ENCODE measurements at regions of chr2 and their contacts with region 1.

Region 1: GRCh38 chr2:135741395-135742324 is at the start of gene UBXN4:
- DNase-seq: peak; percentile 99
- H3K4me3 ChIP-seq: peak within 1 kb of the TSS; percentile 71 to 99
- H3K27ac ChIP-seq: peak within 1 kb of the TSS; percentile 100
- H3K4me1 ChIP-seq: peaks cover 36% of the 10 kb centered on the region
- H3K27me3 ChIP-seq: no peaks in the 10 kb centered on the region
- CTCF ChIP-seq: peak in 1 of 3 experiments; percentile 13
- POLR2A ChIP-seq: peak in 1 of 2 donors; percentile 90
- total RNA-seq, gene UBXN4: 51.6 TPM

Region 2: GRCh38 chr2:135600915-135601314 is 140.7 kb before region 1 on chr2:
- intact Hi-C with region 1: no loop called
- DNase-seq: no peak
- H3K4me3 ChIP-seq: no peak overlapping the region
- H3K27ac ChIP-seq: no peak overlapping the region
- H3K4me1 ChIP-seq: peaks cover 12% of the 10 kb centered on the region
- H3K27me3 ChIP-seq: no peaks in the 10 kb centered on the region
- CTCF ChIP-seq: no peak
- POLR2A ChIP-seq: no peak

Region 3: DNA sequence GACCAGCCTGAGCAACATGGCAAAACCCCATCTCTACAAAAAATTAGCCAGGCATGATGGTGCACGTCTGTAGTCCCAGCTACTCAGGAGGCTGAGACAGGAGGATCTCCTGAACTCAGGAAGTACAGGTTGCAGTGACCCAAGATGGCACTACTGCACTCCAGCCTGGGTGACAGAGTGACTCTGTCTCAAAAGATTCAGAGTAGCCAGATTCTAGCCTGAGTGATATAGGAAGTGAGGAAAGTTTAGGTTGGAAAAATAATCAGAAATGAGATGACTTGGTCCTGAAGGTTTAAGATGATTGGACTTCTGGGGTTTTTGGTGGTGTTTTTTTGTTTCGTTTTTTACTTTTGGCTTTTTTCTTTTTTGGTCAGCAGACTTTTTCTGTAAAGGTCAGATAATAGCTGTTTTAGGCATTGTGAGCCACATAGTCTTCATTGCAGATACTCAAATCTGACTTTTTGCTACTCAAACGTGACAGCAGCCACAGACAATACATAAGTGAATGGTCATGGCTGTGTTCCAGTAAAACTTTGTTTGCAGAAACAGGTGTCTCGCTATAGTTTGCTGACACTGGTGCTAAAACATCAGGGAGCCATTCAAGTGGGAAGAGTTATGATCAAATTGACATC is 104.1 kb before region 1 on chr2:
- intact Hi-C with region 1: no loop called
- DNase-seq: no peak
- H3K4me3 ChIP-seq: no peak overlapping the region
- H3K27ac ChIP-seq: no peak overlapping the region
- H3K4me1 ChIP-seq: no peaks in the 10 kb centered on the region
- H3K27me3 ChIP-seq: no peaks in the 10 kb centered on the region
- CTCF ChIP-seq: no peak
- POLR2A ChIP-seq: no peak

Region 4: DNA sequence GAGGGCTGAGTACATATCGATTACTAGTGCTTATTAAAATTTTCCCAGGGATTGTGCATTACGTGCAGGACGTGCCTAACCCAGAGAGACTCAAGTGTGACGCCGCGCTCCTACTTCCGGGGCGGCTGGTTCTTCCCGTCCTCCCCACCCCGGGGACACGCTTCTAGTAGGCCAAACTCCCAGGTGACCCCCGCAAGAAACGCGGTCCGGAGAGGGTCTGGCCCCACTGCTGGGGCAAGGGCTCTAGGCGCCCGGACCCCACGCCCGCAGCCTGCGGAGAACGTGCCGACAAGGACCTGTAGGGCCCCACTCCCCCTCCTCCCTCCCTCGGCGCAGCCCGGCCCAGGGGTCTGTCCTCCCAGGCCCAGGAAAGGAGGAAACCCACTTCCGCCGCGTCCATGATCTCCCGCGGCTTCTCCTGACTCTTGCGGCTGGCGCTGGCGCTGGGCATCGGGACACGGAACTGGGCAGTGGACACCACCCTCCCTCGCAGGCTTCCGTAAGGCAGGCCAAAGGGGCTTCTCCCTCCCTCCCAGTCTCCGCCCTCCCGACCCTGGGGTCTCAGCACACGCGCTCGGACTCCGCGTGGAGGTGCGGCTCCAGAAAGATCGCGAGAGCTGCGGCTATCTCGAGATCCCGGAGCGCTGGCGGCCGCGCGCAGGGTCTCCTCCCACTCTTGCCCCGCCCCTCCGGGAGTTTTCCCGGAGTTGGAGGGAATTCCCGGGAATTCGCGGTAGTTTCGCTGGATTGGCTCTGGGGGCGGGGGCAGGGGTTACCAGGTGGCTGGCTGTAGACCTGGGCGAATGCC is 243.6 kb after region 1 on chr2 and contains the start of gene DARS1:
- intact Hi-C with region 1: loop called (anchors 10 kb)
- DNase-seq: peak in 1 of 2 donors; percentile 93
- H3K4me3 ChIP-seq: peak within 1 kb of the TSS; percentile 73 to 100
- H3K27ac ChIP-seq: peak within 1 kb of the TSS; percentile 97
- H3K4me1 ChIP-seq: peaks cover 17% of the 10 kb centered on the region
- H3K27me3 ChIP-seq: no peaks in the 10 kb centered on the region
- CTCF ChIP-seq: no peak
- POLR2A ChIP-seq: peak in 1 of 2 donors; percentile 63
- total RNA-seq, gene DARS1: 63.1 TPM

Measured in vagina (tissue), 2 donors.